ENCODE measurements at regions of chr19 and their contacts with region 1.

Region 1: DNA sequence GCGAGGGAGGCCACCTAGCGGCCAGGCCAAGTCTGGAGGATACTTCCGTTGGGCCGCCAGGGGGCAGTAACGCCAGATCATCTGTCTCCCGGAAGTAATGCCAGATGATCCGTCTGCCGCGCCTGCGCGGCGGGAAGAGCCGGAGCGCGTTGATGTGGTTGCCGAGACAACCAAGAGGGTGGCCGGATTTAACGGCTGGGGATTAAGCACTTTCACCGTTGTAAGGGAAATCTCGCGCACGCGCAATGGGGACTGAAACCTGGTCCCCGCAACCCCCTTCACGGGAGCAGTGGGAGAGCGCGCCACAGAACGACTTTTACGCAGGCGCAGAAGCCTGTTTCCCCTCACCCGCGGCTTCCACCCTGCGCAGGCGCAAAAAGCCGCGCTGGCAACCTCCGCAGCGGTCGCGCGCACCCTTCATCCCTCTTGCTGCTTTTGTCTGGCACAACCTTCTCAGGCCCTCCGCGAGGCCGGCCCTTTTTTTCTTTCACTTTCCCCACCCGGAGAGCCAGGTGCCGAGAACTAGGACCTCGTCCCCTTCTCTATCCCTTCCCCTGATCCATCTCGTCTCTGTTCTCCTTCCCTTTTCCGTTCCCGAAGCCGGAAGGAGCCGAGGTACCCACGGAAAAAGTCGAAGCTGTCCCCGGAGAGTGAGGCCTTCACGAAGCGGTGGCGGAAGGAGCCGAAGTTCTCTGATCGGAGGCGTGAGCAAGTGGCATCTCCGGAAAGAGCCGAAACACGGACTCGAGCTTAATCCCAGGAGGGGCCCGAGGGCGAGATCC is 886 bp upstream of the U2AF2 start:
- DNase-seq: peak; percentile 79 to 99 (median 86)
- ATAC-seq: peak; percentile 91
- H3K4me3 ChIP-seq: peak overlapping the region; percentile 70
- H3K27ac ChIP-seq: peak overlapping the region; percentile 100
- H3K4me1 ChIP-seq: peaks cover 26 to 59% of the 10 kb centered on the region in 2 experiments; a peak in 4 of 5 replicates
- H3K27me3 ChIP-seq: no peaks in the 10 kb centered on the region
- CTCF ChIP-seq: peak; percentile 99 to 100 (median 100)
- EP300 ChIP-seq: peak; percentile 53; the same call in 1 of the 2 replicates
- POLR2A ChIP-seq: peak; percentile 94
- RAD21 ChIP-seq: peak; percentile 59 to 75

Region 2: GRCh38 chr19:55516878-55517620 is 136.9 kb before region 1 on chr19:
- CTCF ChIA-PET with region 1: interaction called, 12 read pairs
- POLR2A ChIA-PET with region 1: no interaction called
- in situ Hi-C with region 1: no loop called
- intact Hi-C with region 1: no loop called
- DNase-seq: peak; percentile 95 to 100 (median 100)
- ATAC-seq: peak; percentile 100
- H3K4me3 ChIP-seq: peak overlapping the region; percentile 42
- H3K27ac ChIP-seq: peak overlapping the region; percentile 76
- H3K4me1 ChIP-seq: peaks cover 3 to 22% of the 10 kb centered on the region in 2 experiments; a peak in 3 of 5 replicates
- H3K27me3 ChIP-seq: peaks cover 3 to 16% of the 10 kb centered on the region in 2 experiments; a peak in 3 of 5 replicates
- CTCF ChIP-seq: peak; percentile 90 to 96 (median 96)
- EP300 ChIP-seq: no peak
- POLR2A ChIP-seq: 0 out of 2 replicates have a peak, but pooled peaks have one; percentile 49
- RAD21 ChIP-seq: peak; percentile 98 to 99

Region 3: GRCh38 chr19:55667958-55668357 is 14.0 kb after region 1 on chr19:
- CTCF ChIA-PET with region 1: interaction called, 3 read pairs
- POLR2A ChIA-PET with region 1: interaction called, 21 read pairs
- in situ Hi-C with region 1: no loop called
- intact Hi-C with region 1: no loop called
- DNase-seq: peak in 1 of 4 experiments; percentile 16
- ATAC-seq: no peak
- H3K4me3 ChIP-seq: no peak overlapping the region
- H3K27ac ChIP-seq: no peak overlapping the region
- H3K4me1 ChIP-seq: peaks cover 14 to 30% of the 10 kb centered on the region in 2 experiments; a peak in 4 of 5 replicates
- H3K27me3 ChIP-seq: no peaks in the 10 kb centered on the region
- CTCF ChIP-seq: no peak
- EP300 ChIP-seq: no peak
- POLR2A ChIP-seq: no peak
- RAD21 ChIP-seq: no peak

Region 4: GRCh38 chr19:55674841-55675660 is 21.1 kb after region 1 on chr19 and contains the start of gene EPN1:
- CTCF ChIA-PET with region 1: no interaction called
- POLR2A ChIA-PET with region 1: interaction called, 12 read pairs
- in situ Hi-C with region 1: no loop called
- intact Hi-C with region 1: no loop called
- DNase-seq: peak; percentile 89 to 99 (median 94)
- ATAC-seq: peak; percentile 85
- H3K4me3 ChIP-seq: peak within 1 kb of the TSS; percentile 83
- H3K27ac ChIP-seq: peak within 1 kb of the TSS; percentile 83
- H3K4me1 ChIP-seq: peaks cover 46 to 78% of the 10 kb centered on the region in 2 experiments
- H3K27me3 ChIP-seq: no peaks in the 10 kb centered on the region
- CTCF ChIP-seq: no peak
- EP300 ChIP-seq: peak; percentile 35; the same call in 1 of the 2 replicates
- POLR2A ChIP-seq: peak; percentile 84
- RAD21 ChIP-seq: no peak
- polyA plus RNA-seq, gene EPN1: 0.08 to 0.15 TPM

Region 5: GRCh38 chr19:55720214-55720746 is 66.3 kb after region 1 on chr19:
- CTCF ChIA-PET with region 1: no interaction called
- POLR2A ChIA-PET with region 1: no interaction called
- in situ Hi-C with region 1: no loop called
- intact Hi-C with region 1: no loop called
- DNase-seq: no peak
- ATAC-seq: no peak
- H3K4me3 ChIP-seq: no peak overlapping the region
- H3K27ac ChIP-seq: no peak overlapping the region
- H3K4me1 ChIP-seq: no peaks in the 10 kb centered on the region; a peak in 1 of 5 replicates
- H3K27me3 ChIP-seq: peaks cover 11 to 46% of the 10 kb centered on the region in 2 experiments
- CTCF ChIP-seq: no peak
- EP300 ChIP-seq: no peak
- POLR2A ChIP-seq: no peak
- RAD21 ChIP-seq: no peak

Measured in K562 (cell line).